ENCODE measurements at regions of chr3 and their contacts with region 1.

Region 1: GRCh38 chr3:153144779-153145178 is 17.2 kb upstream of the RAP2B start:
- DNase-seq: peak; percentile 73
- H3K4me3 ChIP-seq: no peak overlapping the region
- H3K27ac ChIP-seq: peak overlapping the region; percentile 12; the same call in 1 of the 2 replicates
- H3K4me1 ChIP-seq: peaks cover 28% of the 10 kb centered on the region
- H3K27me3 ChIP-seq: no peaks in the 10 kb centered on the region

Region 2: GRCh38 chr3:153052096-153052460 is 92.7 kb before region 1 on chr3:
- in situ Hi-C with region 1: loop called (anchors 10 kb)
- DNase-seq: peak; percentile 95
- H3K4me3 ChIP-seq: peak overlapping the region; percentile 36; the same call in 1 of the 2 replicates
- H3K27ac ChIP-seq: peak overlapping the region; percentile 81
- H3K4me1 ChIP-seq: peaks cover 21% of the 10 kb centered on the region
- H3K27me3 ChIP-seq: no peaks in the 10 kb centered on the region